ENCODE measurements at regions of chr9 and their contacts with region 1.

Region 1: DNA sequence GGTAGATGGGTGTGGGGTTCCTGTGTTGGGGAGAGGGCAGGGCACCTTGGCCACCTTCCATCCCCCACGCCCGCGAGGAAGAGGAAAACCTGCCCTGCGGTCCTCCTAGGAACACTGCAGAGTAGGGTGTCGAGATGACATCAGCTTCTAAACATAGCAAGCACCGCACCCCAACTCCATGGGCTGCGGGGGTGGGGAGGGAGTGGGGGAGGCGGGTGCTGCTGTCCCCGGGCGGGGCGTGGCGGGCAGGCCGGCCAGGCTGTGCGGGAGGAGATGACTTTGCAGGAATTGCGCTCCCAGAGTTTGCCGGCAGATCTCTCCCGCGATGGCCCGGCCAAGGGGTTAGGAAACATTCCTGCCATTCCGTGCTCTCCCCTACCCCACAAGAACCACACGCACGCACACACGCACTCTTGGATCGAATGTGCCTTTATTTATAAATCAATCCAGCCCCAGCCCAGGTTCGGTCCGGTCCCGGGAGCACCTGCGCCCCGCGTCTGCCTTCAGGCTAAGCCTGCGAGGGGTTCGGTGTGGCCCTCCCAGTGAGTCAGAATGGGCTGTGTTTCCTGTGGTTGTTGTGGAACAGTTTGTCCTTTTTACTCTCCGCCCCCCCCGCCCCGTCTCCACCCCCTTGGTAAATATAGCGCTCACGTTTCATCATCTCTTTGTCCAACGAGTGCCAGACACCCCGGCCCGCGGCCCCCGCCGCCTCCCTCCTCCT is 5.2 kb upstream of the KLF9 start:
- DNase-seq: peak; percentile 77 to 94 (median 86)
- ATAC-seq: peak; percentile 56
- H3K4me3 ChIP-seq: peak overlapping the region; percentile 73 to 79
- H3K4me3 Mint-ChIP-seq: peak overlapping the region; percentile 95
- H3K27ac ChIP-seq: peak overlapping the region; percentile 95 to 97
- H3K27ac Mint-ChIP-seq: peak overlapping the region; percentile 100
- H3K4me1 ChIP-seq: peaks cover 42% of the 10 kb centered on the region
- H3K4me1 Mint-ChIP-seq: peaks cover 51% of the 10 kb centered on the region
- H3K27me3 ChIP-seq: no peaks in the 10 kb centered on the region
- H3K27me3 Mint-ChIP-seq: no peaks in the 10 kb centered on the region
- CTCF ChIP-seq: no peak

Region 2: DNA sequence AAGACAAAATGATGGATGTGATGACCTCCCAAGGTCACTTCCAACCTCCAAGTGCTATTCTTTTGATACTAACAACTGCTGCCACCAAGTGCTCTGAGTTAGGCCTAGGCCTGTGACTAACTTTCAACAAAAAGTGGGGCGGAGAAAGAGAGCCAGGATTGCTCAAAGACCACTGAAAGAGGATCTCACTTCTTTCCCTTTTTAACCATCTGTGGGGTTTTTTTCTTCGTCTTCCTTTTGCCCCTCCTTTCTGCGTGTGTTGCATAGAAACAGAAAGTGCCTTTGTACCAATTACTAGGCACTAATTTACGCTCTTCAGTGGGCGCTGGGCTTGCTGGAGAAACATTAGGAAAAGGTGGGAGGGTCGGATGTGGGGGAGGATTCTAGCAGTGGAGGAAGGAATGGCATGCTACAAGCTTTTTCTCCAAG is 13.3 kb before region 1 on chr9:
- CTCF ChIA-PET with region 1: interaction called, 5 read pairs
- POLR2A ChIA-PET with region 1: interaction called, 102 read pairs
- intact Hi-C with region 1: loop called in 1 of 2 experiments (anchors 1 kb)
- DNase-seq: peak in 4 of 9 experiments; percentile 22 to 68 (median 44)
- ATAC-seq: peak; percentile 36
- H3K4me3 ChIP-seq: peak overlapping the region in 1 of 2 experiments; percentile 1
- H3K4me3 Mint-ChIP-seq: peak overlapping the region; percentile 82
- H3K27ac ChIP-seq: peak overlapping the region in 1 of 2 experiments; percentile 55
- H3K27ac Mint-ChIP-seq: peak overlapping the region; percentile 79
- H3K4me1 ChIP-seq: peaks cover 67% of the 10 kb centered on the region
- H3K4me1 Mint-ChIP-seq: peaks cover 85% of the 10 kb centered on the region
- H3K27me3 ChIP-seq: no peaks in the 10 kb centered on the region
- H3K27me3 Mint-ChIP-seq: no peaks in the 10 kb centered on the region
- CTCF ChIP-seq: no peak

Measured in CD8-positive, alpha-beta T cell (primary cell).